Activated naive CD8-positive, alpha-beta T cell treated with anti-CD3 and anti-CD28 coated beads, Interleukin-2, amount 10 ng/mL, durations not matched to agents 7 days and 5 days (primary cell): ENCODE measurements at regions of chr9 and their contacts with region 1.

Region 1: GRCh38 chr9:33024966-33025571 is at the start of gene DNAJA1:
- DNase-seq: peak; percentile 99
- ATAC-seq: peak; percentile 76
- H3K4me3 Mint-ChIP-seq: peak within 1 kb of the TSS; percentile 97
- H3K27ac Mint-ChIP-seq: peak within 1 kb of the TSS; percentile 94
- H3K4me1 Mint-ChIP-seq: peaks cover 51% of the 10 kb centered on the region
- H3K27me3 Mint-ChIP-seq: no peaks in the 10 kb centered on the region
- total RNA-seq, gene DNAJA1: 99.1 to 102 TPM

Region 2: GRCh38 chr9:33044127-33044673 is 19.1 kb after region 1 on chr9:
- POLR2A ChIA-PET with region 1: interaction called, 29 read pairs
- DNase-seq: peak; percentile 78
- ATAC-seq: peak; percentile 82
- H3K4me3 Mint-ChIP-seq: peak overlapping the region; percentile 86
- H3K27ac Mint-ChIP-seq: peak overlapping the region; percentile 79
- H3K4me1 Mint-ChIP-seq: peaks cover 15% of the 10 kb centered on the region
- H3K27me3 Mint-ChIP-seq: no peaks in the 10 kb centered on the region

Region 3: GRCh38 chr9:33167046-33167808 is 142.2 kb after region 1 on chr9 and contains the start of gene B4GALT1:
- POLR2A ChIA-PET with region 1: interaction called, 14 read pairs
- DNase-seq: peak; percentile 97
- ATAC-seq: peak; percentile 86
- H3K4me3 Mint-ChIP-seq: peak within 1 kb of the TSS; percentile 98
- H3K27ac Mint-ChIP-seq: peak within 1 kb of the TSS; percentile 100
- H3K4me1 Mint-ChIP-seq: peaks cover 45% of the 10 kb centered on the region
- H3K27me3 Mint-ChIP-seq: no peaks in the 10 kb centered on the region
- total RNA-seq, gene B4GALT1: 34.6 to 35.7 TPM

Region 4: GRCh38 chr9:33264473-33265177 is 239.6 kb after region 1 on chr9 and contains the starts of genes BAG1 and CHMP5:
- POLR2A ChIA-PET with region 1: interaction called, 23 read pairs
- DNase-seq: peak; percentile 99
- ATAC-seq: peak; percentile 85
- H3K4me3 Mint-ChIP-seq: peak within 1 kb of the TSS; percentile 98
- H3K27ac Mint-ChIP-seq: peak within 1 kb of the TSS; percentile 97
- H3K4me1 Mint-ChIP-seq: peaks cover 40% of the 10 kb centered on the region
- H3K27me3 Mint-ChIP-seq: no peaks in the 10 kb centered on the region
- total RNA-seq, gene BAG1: 63.8 to 73.2 TPM
- total RNA-seq, gene CHMP5: 96.1 to 97.1 TPM